A549 (cell line): ENCODE measurements at regions of chr4 and their contacts with region 1.

Region 1: DNA sequence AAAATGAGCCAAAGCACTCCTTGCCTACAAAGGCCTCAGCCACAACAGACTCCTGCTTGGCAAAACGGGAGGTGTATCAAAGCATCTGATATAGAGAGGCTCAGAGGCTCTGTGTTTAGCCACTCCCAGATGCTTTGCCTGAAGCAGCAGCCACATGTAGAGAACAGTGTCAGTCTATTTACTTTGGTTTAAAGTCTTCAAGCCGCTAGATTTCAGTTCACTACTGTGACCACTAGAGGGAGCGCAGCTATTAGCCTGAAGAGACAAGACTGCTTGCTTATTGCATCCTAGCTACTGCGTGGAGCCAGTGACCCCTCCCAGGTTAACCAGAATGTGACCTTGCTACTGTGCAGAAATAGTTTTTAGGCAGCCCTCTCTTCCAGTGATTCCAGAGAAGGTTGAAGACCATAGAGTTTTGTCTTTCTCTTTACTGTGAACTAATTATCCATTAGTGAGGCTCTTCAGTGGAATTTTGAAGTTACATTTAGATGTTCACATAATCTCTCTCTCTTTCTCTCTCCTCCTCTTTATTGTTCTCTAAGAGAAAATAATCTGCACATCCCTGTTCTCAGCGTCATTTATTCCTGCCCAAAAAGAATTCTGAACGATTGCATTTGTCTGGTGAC is 39.3 kb downstream of the BMP3 start:
- DNase-seq: peak; percentile 7 to 85
- ATAC-seq: peak; percentile 94 to 97
- H3K4me3 ChIP-seq: no peak overlapping the region
- H3K27ac ChIP-seq: no peak overlapping the region
- H3K4me1 ChIP-seq: no peaks in the 10 kb centered on the region
- CTCF ChIP-seq: peak; percentile 76
- EP300 ChIP-seq: no peak
- POLR2A ChIP-seq: no peak
- RAD21 ChIP-seq: peak; percentile 78 to 83

Region 2: GRCh38 chr4:81260443-81261101 is 190.8 kb after region 1 on chr4:
- CTCF ChIA-PET with region 1: interaction called, 12 read pairs
- POLR2A ChIA-PET with region 1: no interaction called
- DNase-seq: no peak
- ATAC-seq: no peak
- H3K4me3 ChIP-seq: no peak overlapping the region
- H3K27ac ChIP-seq: no peak overlapping the region
- H3K4me1 ChIP-seq: peaks cover 16% of the 10 kb centered on the region; the same call in 1 of the 3 replicates
- CTCF ChIP-seq: peak; percentile 18; the same call in 1 of the 3 replicates
- EP300 ChIP-seq: no peak
- POLR2A ChIP-seq: no peak
- RAD21 ChIP-seq: no peak; a peak in 1 of 5 replicates

Region 3: DNA sequence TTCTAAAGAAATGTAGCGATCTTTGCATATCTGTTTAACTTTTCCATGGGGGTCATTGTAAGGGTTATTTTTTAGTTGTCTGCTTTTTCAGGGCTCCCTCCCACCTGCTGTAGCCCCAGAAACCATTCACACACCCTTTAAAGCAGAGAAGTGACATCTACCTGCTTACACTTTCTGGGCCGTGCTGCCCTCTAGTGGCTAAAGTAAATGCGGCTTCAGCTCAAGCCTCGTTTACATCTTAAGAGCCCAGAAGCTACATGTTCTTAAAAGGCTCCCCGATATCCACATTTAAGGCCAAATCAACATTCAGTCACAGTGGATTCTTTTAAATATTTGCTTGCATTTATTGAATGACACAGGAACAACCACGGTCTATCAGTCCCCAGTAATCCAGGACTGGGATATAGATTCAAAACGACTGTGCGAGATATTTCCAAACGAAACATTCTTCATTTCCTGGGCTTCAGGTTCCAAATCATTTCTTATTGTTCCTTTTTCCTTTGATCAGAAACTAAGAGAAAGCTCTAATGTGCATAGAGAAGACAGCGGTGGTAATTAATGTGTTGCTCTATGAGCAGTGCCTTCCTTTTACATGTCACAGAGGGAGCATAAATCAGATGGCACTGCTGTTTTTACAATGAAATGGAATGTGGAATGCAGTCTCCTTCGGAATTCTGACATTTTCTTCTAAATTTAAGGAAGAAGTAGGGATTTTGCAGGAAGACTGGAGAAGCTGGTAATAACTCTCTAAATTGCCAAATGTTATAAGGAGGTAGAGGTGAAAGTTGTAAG is 282.0 kb after region 1 on chr4:
- CTCF ChIA-PET with region 1: interaction called, 78 read pairs
- POLR2A ChIA-PET with region 1: no interaction called
- DNase-seq: peak; percentile 21 to 69
- ATAC-seq: peak; percentile 80 to 89; a peak in 4 of 6 replicates
- H3K4me3 ChIP-seq: no peak overlapping the region
- H3K27ac ChIP-seq: no peak overlapping the region
- H3K4me1 ChIP-seq: no peaks in the 10 kb centered on the region
- CTCF ChIP-seq: peak; percentile 74
- EP300 ChIP-seq: no peak
- POLR2A ChIP-seq: no peak
- RAD21 ChIP-seq: peak; percentile 74 to 75